Common myeloid progenitor, CD34-positive (primary cell): ENCODE measurements at regions of chr12 and their contacts with region 1.

Region 1: GRCh38 chr12:575948-576612 is 87.2 kb downstream of the NINJ2 start:
- DNase-seq: peak; percentile 66 to 86 (median 81)
- H3K4me3 ChIP-seq: peak overlapping the region in 3 of 7 experiments; percentile 34 to 62 (median 40)
- H3K27ac ChIP-seq: peak overlapping the region in 1 of 2 experiments; percentile 14
- H3K4me1 ChIP-seq: peaks cover 0 to 26% (median 16%) of the 10 kb centered on the region in 4 experiments
- H3K27me3 ChIP-seq: no peaks in the 10 kb centered on the region

Region 2: DNA sequence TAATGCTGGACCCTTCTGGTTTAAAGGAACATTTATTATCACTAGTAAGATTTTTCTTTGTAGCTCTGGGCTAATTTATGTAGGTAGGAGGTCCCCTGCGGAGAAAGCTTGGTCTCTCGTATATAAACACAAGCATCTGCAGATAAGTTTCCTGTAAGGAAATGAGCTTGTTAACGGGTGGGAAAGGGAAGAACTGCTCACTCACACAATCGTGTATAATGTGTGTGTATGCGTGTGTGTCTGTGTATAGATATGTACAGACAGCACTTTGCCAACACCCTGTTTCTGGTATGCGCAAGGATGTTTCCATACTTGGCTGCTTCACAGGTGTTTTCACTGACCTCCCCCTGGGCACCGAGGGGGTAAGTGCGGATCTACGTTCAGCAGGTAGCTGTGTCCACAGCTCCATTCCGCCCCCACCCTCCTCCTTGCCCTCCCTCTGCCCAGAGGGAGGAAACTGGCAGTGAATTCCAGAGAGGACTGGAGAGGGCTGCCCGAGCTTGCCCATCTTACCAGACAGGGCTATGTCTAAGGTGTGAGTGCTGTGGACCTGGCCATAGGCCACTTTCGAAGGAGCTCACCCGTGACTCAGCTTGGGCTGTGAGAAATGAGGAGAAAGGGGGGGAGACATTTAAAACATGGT is 22.0 kb after region 1 on chr12:
- CTCF ChIA-PET with region 1: interaction called, 22 read pairs
- POLR2A ChIA-PET with region 1: interaction called, 4 read pairs
- DNase-seq: peak; percentile 64 to 90 (median 83)
- H3K4me3 ChIP-seq: peak overlapping the region in 5 of 7 experiments; percentile 10 to 63 (median 53)
- H3K27ac ChIP-seq: peak overlapping the region; percentile 83 to 89
- H3K4me1 ChIP-seq: peaks cover 12 to 46% (median 32%) of the 10 kb centered on the region in 4 experiments
- H3K27me3 ChIP-seq: no peaks in the 10 kb centered on the region